IMR-90 (cell line): ENCODE measurements at regions of chr7 and their contacts with region 1.

Region 1: DNA sequence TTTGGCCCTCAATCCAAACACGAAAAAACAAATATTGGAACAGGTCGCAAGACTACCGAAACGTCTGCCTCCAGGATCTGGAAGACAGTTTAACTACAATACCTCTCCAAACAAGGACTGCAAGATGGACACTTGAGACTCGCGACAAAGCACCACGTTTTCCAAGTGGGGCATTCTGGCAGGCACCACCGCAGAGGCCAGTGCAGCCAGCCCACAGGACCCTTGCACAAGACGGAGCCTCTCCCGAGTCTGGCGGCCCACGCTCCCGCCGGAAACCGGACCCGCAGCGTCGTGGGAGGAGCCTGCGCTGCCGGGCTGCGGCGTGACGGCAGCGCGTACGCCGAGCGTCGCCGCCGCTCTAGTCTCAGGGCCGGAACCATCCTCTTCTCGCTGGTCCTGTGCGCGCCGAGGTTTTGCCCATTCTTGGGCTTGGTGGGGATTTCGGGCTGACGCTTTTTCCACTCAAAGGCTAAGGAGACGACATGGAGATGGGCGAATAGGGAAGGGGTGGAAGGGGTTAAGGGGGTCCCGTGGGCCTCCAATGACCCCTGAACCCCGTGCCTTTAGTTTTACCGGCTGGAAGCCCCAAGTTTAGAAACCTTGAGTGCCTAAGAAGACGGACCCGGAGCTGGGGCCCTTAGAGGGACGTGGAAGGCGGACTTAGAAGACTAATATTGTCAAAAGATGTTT is at the start of gene ORC5:
- DNase-seq: peak; percentile 80
- ATAC-seq: peak; percentile 99
- H3K4me3 ChIP-seq: peak within 1 kb of the TSS; percentile 65
- H3K27ac ChIP-seq: peak within 1 kb of the TSS; percentile 79
- H3K4me1 ChIP-seq: peaks cover 2% of the 10 kb centered on the region; the same call in 1 of the 2 replicates
- H3K27me3 ChIP-seq: no peaks in the 10 kb centered on the region
- CTCF ChIP-seq: no peak
- POLR2A ChIP-seq: peak; percentile 82
- RAD21 ChIP-seq: no peak
- total RNA-seq, gene ORC5: 18.8 and 27.8 TPM in 2 replicates

Region 2: GRCh38 chr7:104040666-104041065 is 167.2 kb before region 1 on chr7:
- CTCF ChIA-PET with region 1: no interaction called
- POLR2A ChIA-PET with region 1: interaction called, 14 read pairs
- dilution Hi-C with region 1: no loop called
- in situ Hi-C with region 1: no loop called
- intact Hi-C with region 1: no loop called
- DNase-seq: no peak
- ATAC-seq: no peak
- H3K4me3 ChIP-seq: no peak overlapping the region
- H3K27ac ChIP-seq: no peak overlapping the region
- H3K4me1 ChIP-seq: no peaks in the 10 kb centered on the region
- H3K27me3 ChIP-seq: no peaks in the 10 kb centered on the region
- CTCF ChIP-seq: no peak
- POLR2A ChIP-seq: no peak
- RAD21 ChIP-seq: no peak

Region 3: DNA sequence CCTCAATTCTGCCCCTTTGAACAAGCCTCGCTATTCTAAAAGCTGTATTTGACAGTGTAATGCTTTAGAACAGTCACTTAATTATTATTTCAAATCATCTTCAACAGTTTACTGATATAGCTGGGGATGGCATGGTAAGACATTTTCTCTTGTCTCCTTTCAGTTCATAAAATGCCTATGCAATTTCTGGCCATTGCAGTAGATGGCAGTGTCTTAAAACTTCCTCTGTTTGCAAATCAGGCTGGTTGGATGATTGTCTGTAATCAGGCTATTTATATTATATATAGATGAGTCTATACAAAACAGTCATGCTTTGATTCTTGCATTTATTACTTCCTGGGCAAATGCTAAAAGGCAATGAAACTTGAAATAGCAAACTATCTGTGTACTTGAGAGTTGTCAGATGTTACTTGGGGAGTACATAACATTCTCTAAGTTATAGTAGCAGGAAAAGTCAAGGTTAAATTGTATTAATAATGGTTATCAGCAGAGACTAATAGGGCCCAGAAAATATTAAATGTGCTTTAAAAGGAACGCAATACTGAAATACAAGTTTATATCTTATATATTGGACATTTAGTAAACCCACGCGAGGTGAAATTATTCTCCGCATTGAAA is 65.0 kb after region 1 on chr7:
- CTCF ChIA-PET with region 1: no interaction called
- POLR2A ChIA-PET with region 1: interaction called, 4 read pairs
- dilution Hi-C with region 1: no loop called
- in situ Hi-C with region 1: no loop called
- intact Hi-C with region 1: loop called (anchors 2 kb)
- DNase-seq: peak; percentile 57
- ATAC-seq: peak; percentile 83
- H3K4me3 ChIP-seq: no peak overlapping the region
- H3K27ac ChIP-seq: no peak overlapping the region
- H3K4me1 ChIP-seq: no peaks in the 10 kb centered on the region
- H3K27me3 ChIP-seq: no peaks in the 10 kb centered on the region
- CTCF ChIP-seq: peak; percentile 56
- POLR2A ChIP-seq: no peak
- RAD21 ChIP-seq: peak; percentile 51

Region 4: GRCh38 chr7:104862719-104863118 is 654.8 kb after region 1 on chr7:
- CTCF ChIA-PET with region 1: no interaction called
- POLR2A ChIA-PET with region 1: no interaction called
- dilution Hi-C with region 1: no loop called
- in situ Hi-C with region 1: no loop called
- intact Hi-C with region 1: no loop called
- DNase-seq: no peak
- ATAC-seq: no peak
- H3K4me3 ChIP-seq: no peak overlapping the region
- H3K27ac ChIP-seq: no peak overlapping the region
- H3K4me1 ChIP-seq: no peaks in the 10 kb centered on the region
- H3K27me3 ChIP-seq: peaks cover 23% of the 10 kb centered on the region
- CTCF ChIP-seq: 0 out of 2 replicates have a peak, but pooled peaks have one; percentile 8
- POLR2A ChIP-seq: no peak
- RAD21 ChIP-seq: no peak